Panc1 (cell line): ENCODE measurements at regions of chr12 and their contacts with region 1.

Region 1: DNA sequence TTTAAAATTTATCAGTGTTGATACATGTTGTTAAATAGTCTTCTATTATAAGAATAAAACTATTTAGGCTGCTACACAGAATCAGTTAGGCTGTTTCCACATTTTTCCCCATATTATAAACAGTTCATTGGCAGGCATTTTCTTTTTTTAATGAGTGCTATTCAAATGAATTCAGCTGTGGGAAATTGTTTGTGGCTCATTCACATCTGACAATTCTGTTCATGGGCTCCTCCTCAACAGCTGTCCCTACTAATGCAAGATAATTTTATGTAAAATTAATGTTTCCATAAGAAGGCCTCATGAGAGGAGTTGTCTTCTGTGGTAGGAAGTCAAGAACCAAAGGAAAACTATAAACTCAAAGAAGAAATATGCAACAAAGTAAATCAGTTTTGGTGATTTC is 218.0 kb downstream of the PPFIA2 start:
- DNase-seq: no peak
- ATAC-seq: no peak
- H3K4me3 ChIP-seq: no peak overlapping the region
- H3K27ac ChIP-seq: no peak overlapping the region
- H3K4me1 ChIP-seq: no peaks in the 10 kb centered on the region
- H3K27me3 ChIP-seq: no peaks in the 10 kb centered on the region
- CTCF ChIP-seq: no peak

Region 2: DNA sequence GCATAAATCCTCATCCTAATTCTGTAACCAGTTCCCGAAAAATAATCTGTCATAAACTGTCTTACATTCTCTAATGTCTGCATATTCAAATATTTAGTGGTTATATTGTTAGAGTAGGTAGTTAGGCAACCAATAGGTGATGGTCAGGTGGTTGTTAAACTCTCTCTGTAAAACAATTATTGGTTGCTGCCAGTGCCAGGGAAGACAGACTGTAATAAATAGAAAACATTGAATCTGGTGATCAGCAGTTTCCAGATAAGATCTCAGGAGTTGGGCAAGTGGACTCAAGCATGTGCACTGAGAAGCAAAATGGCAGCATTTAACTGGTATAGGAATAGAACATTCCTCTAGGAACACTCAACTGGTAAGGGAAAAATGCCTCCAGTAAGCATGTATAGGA is 137.8 kb before region 1 on chr12:
- CTCF ChIA-PET with region 1: no interaction called
- POLR2A ChIA-PET with region 1: no interaction called
- in situ Hi-C with region 1: no loop called
- intact Hi-C with region 1: no loop called
- DNase-seq: no peak
- ATAC-seq: no peak
- H3K4me3 ChIP-seq: no peak overlapping the region
- H3K27ac ChIP-seq: no peak overlapping the region
- H3K4me1 ChIP-seq: no peaks in the 10 kb centered on the region
- H3K27me3 ChIP-seq: no peaks in the 10 kb centered on the region
- CTCF ChIP-seq: no peak

Region 3: DNA sequence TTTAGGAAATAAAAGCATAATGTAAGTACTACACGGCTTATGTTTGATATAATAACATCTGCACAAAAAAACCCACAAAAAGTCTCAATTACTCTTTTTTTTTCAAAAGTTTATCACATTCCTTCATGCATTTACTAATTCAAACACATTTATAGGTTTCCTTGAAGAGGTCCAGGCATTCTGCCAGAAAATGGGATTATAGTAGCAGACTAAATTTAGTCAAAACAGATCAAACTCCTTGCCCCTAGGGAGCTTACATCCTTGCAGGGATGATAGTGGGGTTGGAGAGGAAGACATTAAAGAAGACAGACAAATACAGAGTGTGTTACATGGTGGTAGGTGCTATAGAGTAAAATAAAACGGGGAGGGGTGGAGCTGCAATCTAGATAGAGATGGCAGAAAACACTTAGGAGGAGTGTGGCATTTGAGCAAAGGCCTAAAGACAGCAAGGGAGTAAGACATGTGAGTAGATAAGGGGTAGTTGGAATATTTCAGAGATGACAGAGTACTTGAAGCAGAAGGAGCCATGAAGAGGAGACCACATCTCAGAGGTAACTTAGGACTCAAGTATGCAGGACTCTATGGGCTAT is 48.9 kb before region 1 on chr12:
- CTCF ChIA-PET with region 1: no interaction called
- POLR2A ChIA-PET with region 1: no interaction called
- in situ Hi-C with region 1: no loop called
- intact Hi-C with region 1: loop called (anchors 2 kb)
- DNase-seq: no peak
- ATAC-seq: no peak
- H3K4me3 ChIP-seq: no peak overlapping the region
- H3K27ac ChIP-seq: no peak overlapping the region
- H3K4me1 ChIP-seq: no peaks in the 10 kb centered on the region
- H3K27me3 ChIP-seq: no peaks in the 10 kb centered on the region
- CTCF ChIP-seq: no peak